Activated CD4-positive, alpha-beta memory T cell treated with anti-CD3 and anti-CD28 coated beads for 36 hours (primary cell): ENCODE measurements at regions of chr9 and their contacts with region 1.

Region 1: DNA sequence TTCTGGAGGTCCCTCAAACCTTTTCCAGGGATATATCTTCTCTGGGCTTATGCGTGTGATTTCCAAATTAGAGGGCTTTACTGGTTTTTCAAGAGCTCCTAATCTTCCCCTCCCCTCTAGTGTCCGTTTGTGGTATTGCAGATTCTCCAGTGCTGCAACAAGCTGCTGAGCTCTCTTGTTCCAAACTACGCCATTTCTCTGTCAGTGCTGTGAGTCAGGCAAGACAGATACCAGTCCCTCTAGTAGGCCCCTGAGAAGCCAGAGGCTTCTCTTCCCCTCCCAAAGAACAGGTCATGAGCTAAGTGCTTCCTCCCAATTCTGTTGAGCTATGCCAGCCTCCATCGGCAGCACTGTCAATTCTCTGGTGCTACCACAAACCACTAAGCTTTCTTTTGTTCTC is 149.5 kb downstream of the FANCC start:
- DNase-seq: peak; percentile 71
- H3K4me3 Mint-ChIP-seq: no peak overlapping the region
- H3K27ac Mint-ChIP-seq: peak overlapping the region; percentile 19
- H3K4me1 Mint-ChIP-seq: peaks cover 28% of the 10 kb centered on the region
- H3K27me3 Mint-ChIP-seq: no peaks in the 10 kb centered on the region

Region 2: GRCh38 chr9:94681508-94681907 is 486.5 kb before region 1 on chr9:
- CTCF ChIA-PET with region 1: interaction called, 25 read pairs
- POLR2A ChIA-PET with region 1: no interaction called
- intact Hi-C with region 1: loop called (anchors 1 kb)
- DNase-seq: peak; percentile 68
- H3K4me3 Mint-ChIP-seq: no peak overlapping the region
- H3K27ac Mint-ChIP-seq: no peak overlapping the region
- H3K4me1 Mint-ChIP-seq: no peaks in the 10 kb centered on the region
- H3K27me3 Mint-ChIP-seq: peaks cover 9% of the 10 kb centered on the region

Region 3: DNA sequence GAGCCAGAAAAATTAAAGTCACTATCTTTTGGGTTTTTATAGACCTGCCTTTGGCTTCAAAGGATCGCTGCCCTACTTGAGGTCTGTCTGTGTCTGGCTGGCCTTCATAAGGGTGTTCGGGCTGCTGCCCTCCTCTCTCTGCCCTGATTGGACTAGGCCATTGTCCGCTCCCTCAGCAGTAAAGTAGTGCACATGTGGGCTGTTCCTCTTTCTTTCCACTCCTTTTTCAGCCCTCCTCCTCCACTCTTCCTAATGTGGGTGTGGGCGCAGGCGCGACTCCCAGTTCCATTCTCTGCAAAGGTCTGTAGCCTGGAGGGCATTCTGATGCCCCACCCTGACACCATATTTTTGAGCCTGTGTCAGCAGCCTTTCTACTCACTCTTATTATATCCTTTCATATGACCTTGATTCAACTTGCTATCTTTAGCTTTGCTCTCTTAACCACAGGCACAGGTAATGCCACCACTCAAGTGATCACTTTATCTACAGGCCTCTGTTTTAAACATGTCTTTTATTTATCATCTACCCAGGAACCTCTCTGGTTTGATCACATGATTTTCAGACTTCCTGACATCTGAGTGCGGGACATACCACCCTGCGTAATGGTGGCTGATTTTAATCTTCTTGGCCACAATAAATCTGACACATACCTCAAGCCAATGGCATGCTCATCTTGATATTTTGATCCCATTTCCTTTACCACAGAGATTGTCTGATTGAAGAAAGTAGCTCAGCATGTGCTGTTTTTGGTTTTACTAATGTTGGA is 297.0 kb before region 1 on chr9:
- CTCF ChIA-PET with region 1: interaction called, 5 read pairs
- POLR2A ChIA-PET with region 1: no interaction called
- intact Hi-C with region 1: loop called (anchors 5 kb)
- DNase-seq: peak; percentile 63
- H3K4me3 Mint-ChIP-seq: peak overlapping the region; percentile 30
- H3K27ac Mint-ChIP-seq: peak overlapping the region; percentile 80
- H3K4me1 Mint-ChIP-seq: peaks cover 51% of the 10 kb centered on the region
- H3K27me3 Mint-ChIP-seq: peaks cover 7% of the 10 kb centered on the region

Region 4: DNA sequence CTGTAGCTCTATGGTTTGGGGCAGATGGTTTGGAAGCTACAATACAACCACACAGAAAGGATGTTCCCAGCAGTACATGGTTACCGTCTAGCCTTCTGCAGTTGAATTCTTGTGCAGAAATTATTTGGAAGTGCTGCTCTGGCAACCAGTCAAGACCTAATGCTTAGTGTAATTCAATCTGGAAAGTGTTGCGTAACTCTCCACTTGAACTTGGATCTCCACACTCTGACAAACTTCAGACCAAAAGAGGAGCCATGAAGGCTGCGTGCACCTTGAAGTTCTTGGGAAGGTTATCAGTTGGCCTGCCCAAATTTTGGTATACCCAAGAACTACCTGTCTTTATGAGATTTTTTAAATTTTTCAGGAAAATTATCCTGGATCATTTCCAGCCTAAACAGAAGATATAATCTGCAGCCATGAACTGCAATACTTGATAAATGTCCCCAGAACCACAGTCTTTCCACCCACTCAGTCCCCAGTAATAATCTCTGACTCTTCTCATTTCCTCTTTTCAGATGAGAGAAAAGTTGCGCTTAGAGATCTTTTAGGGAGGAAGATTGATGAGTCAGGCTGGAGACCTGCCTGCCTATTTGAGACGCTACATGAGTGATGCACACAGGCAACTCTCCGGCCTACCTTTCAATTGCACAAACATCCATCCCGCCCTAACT is 10.4 kb before region 1 on chr9:
- CTCF ChIA-PET with region 1: interaction called, 15 read pairs
- POLR2A ChIA-PET with region 1: no interaction called
- intact Hi-C with region 1: no loop called
- DNase-seq: no peak
- H3K4me3 Mint-ChIP-seq: no peak overlapping the region
- H3K27ac Mint-ChIP-seq: no peak overlapping the region
- H3K4me1 Mint-ChIP-seq: peaks cover 3% of the 10 kb centered on the region
- H3K27me3 Mint-ChIP-seq: no peaks in the 10 kb centered on the region

Region 5: DNA sequence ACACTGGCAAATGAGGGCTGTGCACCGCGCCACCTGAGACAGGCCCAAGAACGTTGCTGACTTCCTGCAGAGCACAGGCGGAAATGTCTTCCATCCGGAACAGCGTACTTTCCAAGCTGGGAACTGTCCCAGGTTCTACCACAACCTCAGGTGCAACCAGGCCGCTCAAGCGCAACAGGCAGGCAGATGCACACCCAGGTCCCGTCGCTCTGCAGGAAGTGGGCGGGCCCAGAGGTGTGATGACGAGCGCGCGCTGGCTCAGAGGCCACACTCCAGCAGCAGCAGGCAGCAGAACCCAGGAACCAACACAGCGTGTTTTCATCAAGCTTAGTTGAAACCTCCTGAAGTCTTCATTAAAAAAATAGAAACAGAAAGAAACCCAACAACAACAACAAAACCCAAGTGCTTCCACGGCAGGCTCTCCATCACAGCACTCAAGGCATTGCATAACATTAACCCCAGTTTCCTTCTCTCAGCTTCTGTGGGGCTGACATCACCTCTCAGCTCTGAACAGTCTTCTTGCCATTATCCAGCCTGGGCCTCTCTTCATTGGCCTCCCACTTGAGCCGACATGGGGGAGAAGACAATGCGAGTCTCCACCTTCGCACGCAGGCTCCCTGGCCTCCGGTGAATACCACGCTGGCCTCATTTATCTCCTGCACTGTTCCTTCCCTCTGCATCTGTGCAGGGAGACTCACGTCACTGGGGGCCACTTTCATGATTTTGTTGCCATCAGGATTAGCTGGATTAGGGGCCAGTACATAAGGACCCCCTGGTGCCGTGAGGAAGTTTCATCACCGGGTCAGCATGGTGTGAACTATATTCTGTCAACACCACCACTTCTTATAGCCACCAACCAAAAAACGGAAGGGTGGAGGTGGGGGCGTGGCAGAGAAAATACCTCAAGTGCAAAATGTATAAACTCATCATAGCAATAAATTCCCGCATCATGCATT is 326.7 kb after region 1 on chr9:
- CTCF ChIA-PET with region 1: no interaction called
- POLR2A ChIA-PET with region 1: no interaction called
- intact Hi-C with region 1: loop called (anchors 10 kb)
- DNase-seq: peak; percentile 91
- H3K4me3 Mint-ChIP-seq: peak overlapping the region; percentile 71
- H3K27ac Mint-ChIP-seq: peak overlapping the region; percentile 89
- H3K4me1 Mint-ChIP-seq: peaks cover 49% of the 10 kb centered on the region
- H3K27me3 Mint-ChIP-seq: peaks cover 4% of the 10 kb centered on the region